Right ventricle myocardium inferior (tissue), 1 donor: ENCODE measurements at regions of chr2 and their contacts with region 1.

Region 1: GRCh38 chr2:234500394-234501006 is 3.6 kb upstream of the ARL4C start:
- DNase-seq: peak; percentile 75
- ATAC-seq: peak; percentile 44

Region 2: GRCh38 chr2:234288974-234289455 is 211.5 kb before region 1 on chr2:
- intact Hi-C with region 1: loop called (anchors 1 kb)
- DNase-seq: no peak
- ATAC-seq: peak; percentile 40

Region 3: DNA sequence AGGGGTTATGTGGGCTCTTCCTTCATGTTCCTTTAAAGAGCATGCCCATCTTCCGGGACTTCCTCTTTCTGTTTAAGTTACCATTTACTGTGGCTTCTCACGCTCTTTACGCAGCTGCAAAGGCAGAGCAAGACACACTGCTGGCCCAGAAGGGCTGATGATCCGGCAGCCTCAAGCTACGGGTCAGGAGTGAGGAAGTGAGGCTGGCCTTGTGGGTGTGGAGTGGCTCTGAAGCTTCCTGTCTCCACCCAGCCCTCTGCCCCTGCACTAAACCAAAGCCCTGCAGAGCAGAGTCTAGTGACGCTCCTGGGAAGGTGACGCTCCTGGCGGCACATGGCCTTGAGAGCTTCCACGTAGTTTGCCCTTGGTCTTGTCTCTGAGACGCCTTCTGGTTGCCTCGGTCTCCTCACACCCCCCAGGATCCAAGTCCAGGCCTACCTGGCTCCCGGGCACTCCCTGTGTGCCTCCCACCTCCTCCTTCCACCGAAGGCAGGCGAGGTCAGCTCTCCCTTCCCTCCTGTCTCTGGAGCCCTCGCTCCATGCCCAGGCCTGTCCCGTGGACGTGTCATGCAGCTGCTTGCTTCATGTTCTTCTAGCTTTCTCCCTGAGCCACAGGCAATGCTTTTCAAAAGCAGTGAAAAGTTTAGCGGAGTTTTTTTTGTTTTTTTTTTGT is 54.0 kb before region 1 on chr2:
- intact Hi-C with region 1: loop called (anchors 10 kb)
- DNase-seq: peak; percentile 85
- ATAC-seq: peak; percentile 92